WTC11 (cell line): ENCODE measurements at regions of chr3 and their contacts with region 1.

Region 1: GRCh38 chr3:13495921-13496723 is 16.0 kb downstream of the HDAC11 start:
- DNase-seq: peak; percentile 86
- ATAC-seq: peak; percentile 91
- H3K4me3 Mint-ChIP-seq: no peak overlapping the region
- H3K27ac Mint-ChIP-seq: 0 out of 2 replicates have a peak overlapping the region, but pooled peaks have one; percentile 49
- H3K4me1 Mint-ChIP-seq: peaks cover 6% of the 10 kb centered on the region; the same call in 1 of the 2 replicates
- H3K27me3 Mint-ChIP-seq: no peaks in the 10 kb centered on the region; the same call in 1 of the 2 replicates
- CTCF ChIP-seq: peak; percentile 77

Region 2: DNA sequence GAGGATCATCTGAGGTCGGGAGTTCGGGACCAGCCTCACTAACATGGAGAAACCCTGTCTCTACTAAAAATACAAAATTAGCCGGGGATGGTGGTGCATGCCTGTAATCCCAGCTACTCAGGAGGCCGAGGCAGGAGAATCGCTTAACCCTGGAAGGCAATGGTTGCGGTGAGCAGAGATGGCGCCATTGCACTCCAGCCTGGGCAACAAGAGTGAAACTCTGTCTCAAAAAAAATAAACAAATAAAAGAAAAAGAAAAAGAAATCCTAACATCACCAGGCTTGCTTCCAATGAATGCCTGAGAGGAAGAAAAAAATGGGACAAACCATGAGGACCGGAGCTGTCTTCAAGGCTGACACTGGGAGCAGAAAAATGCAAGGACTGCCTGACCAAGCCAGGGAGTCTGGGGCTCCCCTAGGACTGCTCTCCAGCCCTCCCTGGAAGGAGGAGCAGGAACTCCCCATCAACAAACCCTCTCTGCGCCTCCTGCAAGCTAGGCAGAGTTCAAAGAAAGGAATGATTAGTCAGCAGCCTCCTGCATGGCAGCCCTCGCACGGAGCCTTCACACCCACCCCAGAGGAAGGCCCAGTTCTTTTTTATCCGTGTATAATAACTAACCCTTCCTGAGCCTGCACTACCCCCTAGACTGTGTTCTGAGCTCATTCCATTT is 131.4 kb before region 1 on chr3:
- CTCF ChIA-PET with region 1: no interaction called
- POLR2A ChIA-PET with region 1: no interaction called
- DNase-seq: no peak
- ATAC-seq: peak; percentile 46
- H3K4me3 Mint-ChIP-seq: no peak overlapping the region
- H3K27ac Mint-ChIP-seq: peak overlapping the region; percentile 99
- H3K4me1 Mint-ChIP-seq: peaks cover 25% of the 10 kb centered on the region
- H3K27me3 Mint-ChIP-seq: no peaks in the 10 kb centered on the region
- CTCF ChIP-seq: no peak

Region 3: GRCh38 chr3:13484851-13485590 is 11.1 kb before region 1 on chr3:
- CTCF ChIA-PET with region 1: interaction called, 66 read pairs
- POLR2A ChIA-PET with region 1: interaction called, 3 read pairs
- DNase-seq: peak; percentile 12
- ATAC-seq: no peak
- H3K4me3 Mint-ChIP-seq: no peak overlapping the region
- H3K27ac Mint-ChIP-seq: no peak overlapping the region; the same call in 1 of the 2 replicates
- H3K4me1 Mint-ChIP-seq: peaks cover 17% of the 10 kb centered on the region
- H3K27me3 Mint-ChIP-seq: peaks cover 10% of the 10 kb centered on the region
- CTCF ChIP-seq: no peak

Region 4: DNA sequence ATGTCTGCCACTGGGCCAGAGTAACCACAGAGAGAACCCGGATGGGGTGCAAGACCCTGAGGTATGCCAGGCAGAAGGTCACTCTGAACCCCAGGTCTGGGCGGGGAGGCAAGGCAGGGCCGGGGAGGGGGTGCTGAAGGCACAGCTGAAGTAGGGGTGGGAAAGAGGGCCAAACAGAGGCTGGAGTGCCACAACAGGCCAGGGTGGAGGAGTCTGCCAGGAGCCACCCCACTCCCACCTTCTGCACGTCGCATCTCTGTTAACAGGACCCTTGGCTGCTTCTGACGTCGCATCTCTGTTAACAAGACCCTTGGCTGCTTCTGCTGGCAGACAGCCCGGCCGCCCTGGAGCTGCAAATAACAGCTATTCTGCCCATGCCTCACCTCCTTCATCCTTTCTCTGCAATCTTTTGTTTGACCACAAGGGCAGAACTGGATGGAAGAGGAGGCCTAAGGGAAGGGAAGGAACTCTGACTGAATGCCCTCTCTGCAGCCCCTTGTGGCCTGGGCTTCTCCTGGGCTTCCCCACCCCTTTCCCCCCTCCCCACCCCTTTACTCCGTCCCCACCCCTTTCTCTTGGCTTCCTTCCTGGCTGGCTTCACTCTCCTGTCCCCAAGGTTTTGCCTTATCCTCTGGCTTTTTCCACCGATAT is 32.2 kb after region 1 on chr3:
- CTCF ChIA-PET with region 1: interaction called, 11 read pairs
- POLR2A ChIA-PET with region 1: no interaction called
- DNase-seq: peak; percentile 55
- ATAC-seq: peak; percentile 98
- H3K4me3 Mint-ChIP-seq: no peak overlapping the region
- H3K27ac Mint-ChIP-seq: no peak overlapping the region
- H3K4me1 Mint-ChIP-seq: peaks cover 30% of the 10 kb centered on the region
- H3K27me3 Mint-ChIP-seq: no peaks in the 10 kb centered on the region; the same call in 1 of the 2 replicates
- CTCF ChIP-seq: no peak; the same call in 1 of the 2 replicates

Region 5: DNA sequence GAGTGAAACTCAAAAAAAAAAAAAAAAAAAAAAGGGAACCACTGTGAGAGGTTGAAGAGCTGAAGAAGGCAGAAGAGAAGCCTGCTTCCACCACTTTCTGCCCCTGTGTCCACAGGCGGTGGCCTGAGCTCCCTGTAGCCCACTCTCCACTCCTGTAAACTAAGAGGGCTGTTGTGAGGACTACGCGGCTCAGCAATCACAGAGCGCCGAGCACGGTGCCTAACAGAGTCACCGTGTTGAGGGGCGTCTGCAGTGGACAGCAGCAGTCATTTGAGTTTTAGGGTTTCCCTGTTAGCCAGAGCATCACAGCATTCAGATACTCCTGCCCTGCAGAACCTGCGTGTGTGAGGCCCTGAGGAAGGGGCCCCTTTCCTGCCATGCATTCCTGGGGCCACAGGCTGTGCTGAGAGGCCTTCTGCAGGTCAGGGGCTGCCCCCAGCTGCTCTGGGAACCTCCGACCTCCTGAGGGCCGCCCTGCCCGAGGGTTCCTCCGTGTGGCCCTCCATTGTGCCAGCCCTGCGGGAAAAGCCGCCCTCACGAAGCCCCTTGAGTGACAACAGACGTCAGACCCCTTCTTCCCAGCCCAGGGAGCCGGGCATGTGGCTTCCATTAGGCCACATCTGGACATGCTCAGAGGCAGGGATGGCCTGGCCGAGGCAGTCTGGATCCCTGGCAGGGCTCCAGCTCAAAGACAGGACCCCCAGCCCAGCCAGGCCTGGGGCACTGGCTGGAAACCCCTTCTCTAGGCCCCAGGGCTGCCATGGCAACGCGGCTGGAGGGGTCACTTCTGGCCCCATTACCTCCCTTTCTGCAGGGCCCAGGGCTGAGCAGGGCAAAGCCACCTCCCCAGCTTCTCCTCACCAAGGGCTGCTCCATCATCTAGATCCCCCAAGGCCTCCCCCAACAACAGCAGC is 78.0 kb after region 1 on chr3:
- CTCF ChIA-PET with region 1: interaction called, 11 read pairs
- POLR2A ChIA-PET with region 1: no interaction called
- DNase-seq: no peak
- ATAC-seq: no peak
- H3K4me3 Mint-ChIP-seq: no peak overlapping the region
- H3K27ac Mint-ChIP-seq: no peak overlapping the region
- H3K4me1 Mint-ChIP-seq: peaks cover 20% of the 10 kb centered on the region
- H3K27me3 Mint-ChIP-seq: no peaks in the 10 kb centered on the region
- CTCF ChIP-seq: no peak